Right ventricle myocardium superior (tissue), 1 donor: ENCODE measurements at regions of chr6 and their contacts with region 1.

Region 1: GRCh38 chr6:43269273-43270007 is 26.2 kb downstream of the TTBK1 start:
- DNase-seq: peak; percentile 54
- ATAC-seq: peak; percentile 44

Region 2: DNA sequence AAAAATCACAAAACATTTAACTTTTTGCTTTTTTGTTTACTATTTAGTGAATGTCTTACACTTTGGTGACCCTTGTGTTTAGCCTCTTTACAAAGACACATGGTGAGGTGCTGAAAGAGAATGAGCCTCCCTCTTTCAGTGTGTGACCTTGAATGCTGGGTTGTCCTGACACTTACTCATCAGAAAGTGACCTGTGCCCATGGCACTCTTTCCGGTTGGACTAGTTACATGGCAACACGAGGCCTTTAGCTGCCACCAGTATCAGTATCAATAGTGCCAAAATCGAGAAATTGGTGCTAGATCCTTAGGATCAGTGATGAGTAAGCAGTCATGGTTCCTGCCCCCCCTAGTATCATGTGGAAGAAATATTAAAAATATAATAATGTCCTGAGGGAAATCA is 391.7 kb before region 1 on chr6:
- intact Hi-C with region 1: no loop called
- DNase-seq: no peak
- ATAC-seq: no peak

Region 3: DNA sequence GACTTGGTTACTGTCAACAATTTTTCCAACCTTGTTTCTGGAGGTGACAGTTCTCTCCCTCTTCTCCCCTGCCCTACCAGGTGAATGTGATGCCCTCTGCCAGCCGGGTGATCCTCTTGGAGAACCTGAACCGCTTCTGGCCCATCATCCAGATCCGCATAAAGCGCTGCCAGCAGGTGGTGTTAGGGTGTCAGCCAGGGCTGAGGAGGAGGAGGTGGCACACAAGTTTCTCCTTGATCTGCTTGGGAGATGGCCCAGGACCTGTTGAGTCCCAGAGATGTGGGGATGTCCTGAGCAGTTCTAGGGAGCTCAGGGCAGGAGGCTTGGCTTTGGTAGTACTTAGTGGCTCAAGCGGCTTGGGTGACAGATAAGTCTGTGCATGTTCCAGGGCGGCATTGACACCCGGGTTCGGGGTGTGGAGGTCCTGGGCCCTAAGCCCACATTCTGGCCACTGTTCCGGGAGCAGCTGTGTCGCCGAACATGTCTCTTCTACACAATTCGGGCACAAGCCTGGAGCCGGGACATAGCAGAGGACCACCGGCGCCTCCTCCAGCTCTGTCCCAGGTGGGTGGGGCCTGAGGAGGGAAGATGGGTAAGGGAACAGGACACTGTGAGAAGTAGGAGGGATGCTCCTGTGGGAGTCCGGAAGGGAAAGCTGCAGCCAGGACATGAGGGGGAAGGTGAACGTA is 66.3 kb before region 1 on chr6:
- intact Hi-C with region 1: no loop called
- DNase-seq: no peak
- ATAC-seq: no peak

Region 4: GRCh38 chr6:43318011-43318410 is 48.6 kb after region 1 on chr6:
- intact Hi-C with region 1: no loop called
- DNase-seq: no peak
- ATAC-seq: no peak

Region 5: GRCh38 chr6:43334466-43335095 is 65.1 kb after region 1 on chr6:
- intact Hi-C with region 1: loop called (anchors 5 kb)
- DNase-seq: no peak
- ATAC-seq: peak; percentile 66

Region 6: DNA sequence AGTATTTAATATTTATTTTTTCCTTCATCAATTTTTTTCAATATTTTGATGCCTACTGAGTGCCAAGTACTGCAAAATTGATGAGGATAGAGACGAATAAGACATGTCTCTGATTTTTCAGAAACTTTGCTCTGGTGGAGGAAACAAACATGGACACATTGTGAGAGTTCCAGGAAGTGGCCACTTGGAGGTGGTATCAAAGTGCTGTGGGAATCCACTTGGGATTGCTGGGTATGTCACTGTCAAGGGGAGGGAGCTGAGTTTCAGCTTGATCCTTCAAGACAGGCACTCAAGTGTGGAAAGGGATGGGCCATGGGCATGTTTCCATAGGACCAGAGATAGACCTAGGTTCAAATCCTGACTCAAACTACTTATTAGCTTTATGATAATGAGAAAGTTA is 133.4 kb after region 1 on chr6:
- intact Hi-C with region 1: no loop called
- DNase-seq: no peak
- ATAC-seq: no peak